AG04449 (cell line): ENCODE measurements at regions of chr12 and their contacts with region 1.

Region 1: GRCh38 chr12:94101738-94102660 is 46.4 kb upstream of the PLXNC1 start:
- DNase-seq: no peak
- H3K4me3 ChIP-seq: peak overlapping the region; percentile 68
- CTCF ChIP-seq: peak; percentile 86

Region 2: DNA sequence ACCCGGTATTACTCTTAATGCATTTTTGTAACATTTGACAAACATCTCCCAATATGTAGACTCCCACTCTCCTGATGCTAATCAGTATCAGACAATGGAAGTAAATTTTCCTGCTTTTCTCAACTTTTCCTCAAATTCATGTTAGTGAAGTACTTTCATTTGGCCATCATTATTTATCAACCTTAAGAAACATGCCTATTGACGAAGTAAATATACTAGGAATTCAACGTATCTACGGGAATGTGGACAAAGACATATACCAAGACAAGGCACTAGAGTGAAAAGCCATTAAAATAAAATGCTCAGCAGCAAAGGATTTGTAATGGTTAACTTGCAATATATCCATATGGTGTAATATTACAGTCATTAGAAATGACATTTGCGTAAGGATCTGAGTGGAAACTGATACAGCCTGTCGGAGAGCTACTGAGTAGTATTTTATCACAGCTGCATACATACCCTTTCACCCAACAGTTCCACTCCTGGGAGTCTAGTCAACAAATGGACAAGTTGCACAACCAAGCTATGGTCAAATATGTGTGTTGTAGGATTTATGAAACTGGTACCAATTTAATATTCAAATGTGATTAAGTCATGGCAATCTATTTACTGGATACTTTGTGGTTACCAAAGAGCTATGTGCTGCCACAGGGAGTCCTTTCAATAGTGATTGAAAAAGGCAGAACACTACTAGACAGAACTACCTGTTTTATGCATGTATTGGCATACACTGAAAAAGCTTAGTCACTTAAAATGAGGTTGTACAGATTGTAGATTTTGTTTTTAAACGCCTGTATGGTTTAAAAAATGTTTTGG is 697.8 kb before region 1 on chr12:
- CTCF ChIA-PET with region 1: interaction called, 10 read pairs
- POLR2A ChIA-PET with region 1: interaction called, 3 read pairs
- DNase-seq: no peak
- H3K4me3 ChIP-seq: no peak overlapping the region
- CTCF ChIP-seq: no peak

Region 3: DNA sequence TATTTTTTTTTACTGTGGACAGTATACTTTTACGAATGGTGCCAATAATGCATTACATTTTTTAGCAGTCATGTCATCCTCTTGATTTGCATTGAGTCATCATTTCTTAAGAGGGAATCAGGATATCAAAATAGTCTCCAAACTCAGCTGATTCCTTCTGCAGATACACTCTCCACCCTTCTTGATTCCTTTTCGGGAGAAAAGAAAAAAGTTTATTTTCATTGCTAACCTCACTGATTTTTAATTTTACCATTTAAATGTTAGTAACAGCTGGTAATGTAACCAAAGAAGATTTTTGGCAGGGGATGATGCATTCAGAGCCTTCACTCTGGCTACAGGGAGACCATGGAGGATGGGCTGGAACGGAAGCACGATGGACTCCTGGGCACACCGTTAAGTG is 587.1 kb before region 1 on chr12:
- CTCF ChIA-PET with region 1: interaction called, 112 read pairs
- POLR2A ChIA-PET with region 1: no interaction called
- DNase-seq: peak; percentile 68
- H3K4me3 ChIP-seq: no peak overlapping the region
- CTCF ChIP-seq: no peak

Region 4: GRCh38 chr12:93742110-93742934 is 359.7 kb before region 1 on chr12:
- CTCF ChIA-PET with region 1: interaction called, 21 read pairs
- POLR2A ChIA-PET with region 1: no interaction called
- DNase-seq: no peak
- H3K4me3 ChIP-seq: peak overlapping the region; percentile 61
- CTCF ChIP-seq: peak; percentile 13

Region 5: DNA sequence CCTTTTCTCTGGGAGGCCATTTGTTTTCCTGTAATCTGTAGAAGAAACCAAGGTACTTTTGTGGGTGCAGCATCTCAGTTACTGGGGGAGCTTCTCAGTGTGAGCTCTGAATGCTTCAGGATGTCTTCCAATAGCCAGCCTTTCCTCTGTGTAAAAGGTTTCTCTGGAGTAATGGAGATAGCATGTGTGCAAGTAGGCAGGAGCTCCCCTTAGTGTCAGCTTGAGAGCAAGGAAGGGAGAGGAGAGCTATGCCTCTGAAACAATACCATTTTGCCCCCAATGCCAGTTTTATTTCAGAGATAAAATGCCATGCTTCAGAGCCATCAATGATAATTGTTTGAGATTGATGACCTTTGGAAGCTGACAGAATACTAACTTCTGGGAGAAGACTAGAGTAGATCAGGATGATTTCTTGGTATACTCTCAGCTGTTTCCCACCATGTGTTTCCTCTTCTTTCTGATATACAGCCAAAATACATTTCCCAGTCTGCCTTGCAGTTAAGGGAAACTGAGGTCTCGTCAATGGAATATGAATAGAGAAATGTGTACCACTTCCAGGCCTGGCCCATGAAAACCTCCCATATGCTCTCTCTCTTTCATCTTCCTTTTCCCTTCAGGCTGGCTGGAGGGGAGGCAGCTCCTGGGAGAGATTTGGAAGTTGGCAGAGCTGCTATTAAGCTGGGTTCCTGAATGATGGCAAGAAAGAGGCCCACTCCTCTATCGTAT is 299.1 kb before region 1 on chr12:
- CTCF ChIA-PET with region 1: interaction called, 37 read pairs
- POLR2A ChIA-PET with region 1: no interaction called
- DNase-seq: no peak
- H3K4me3 ChIP-seq: no peak overlapping the region
- CTCF ChIP-seq: peak; percentile 43

Region 6: GRCh38 chr12:93972411-93973208 is 129.4 kb before region 1 on chr12:
- CTCF ChIA-PET with region 1: interaction called, 16 read pairs
- POLR2A ChIA-PET with region 1: no interaction called
- DNase-seq: peak; percentile 29
- H3K4me3 ChIP-seq: no peak overlapping the region
- CTCF ChIP-seq: no peak